Activated CD4-positive, alpha-beta T cell treated with anti-CD3 and anti-CD28 coated beads for 36 hours (primary cell): ENCODE measurements at regions of chr18 and their contacts with region 1.

Region 1: DNA sequence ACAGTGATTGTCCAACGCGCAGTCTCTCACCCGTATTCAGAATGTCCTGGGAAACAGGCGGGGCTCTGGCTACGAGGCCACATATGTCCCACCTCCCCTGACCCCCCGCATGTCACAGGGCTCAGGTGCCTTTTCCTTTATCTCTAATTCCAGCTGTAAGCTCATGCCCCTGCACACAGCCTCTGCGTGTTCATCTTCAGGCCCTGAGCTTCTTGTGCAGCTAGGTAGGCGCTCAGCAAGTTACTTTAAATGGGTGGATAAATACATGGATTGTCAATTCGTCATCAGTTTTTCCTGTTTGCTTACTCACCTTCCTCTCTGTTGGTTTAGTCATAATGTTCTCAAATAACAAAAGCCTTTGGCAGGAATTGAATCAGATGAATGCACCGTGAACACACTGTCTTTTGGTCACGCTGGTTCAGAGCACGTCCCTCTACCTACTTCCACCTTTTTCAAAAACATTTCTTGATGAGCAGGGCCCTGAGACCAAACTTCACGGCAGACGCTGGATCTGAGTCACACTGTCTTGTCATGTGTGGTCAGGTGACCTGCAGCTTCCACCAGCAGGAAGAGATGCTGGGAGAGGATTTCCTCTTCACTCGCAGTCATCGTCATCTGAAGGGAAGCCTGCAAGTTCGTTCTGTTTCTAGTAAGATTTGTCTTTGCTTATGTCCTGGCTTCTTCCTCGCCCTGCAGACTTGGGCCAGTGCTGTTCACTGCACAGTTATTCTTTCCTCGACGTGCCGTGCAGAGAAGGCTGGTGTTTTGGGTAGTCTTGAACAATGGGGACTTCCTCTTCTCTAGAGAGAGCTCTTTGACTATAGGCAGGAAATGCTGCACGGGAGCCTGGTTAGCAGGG is 138.1 kb downstream of the PTGR3 start:
- DNase-seq: peak; percentile 82
- ATAC-seq: peak; percentile 94
- H3K4me3 Mint-ChIP-seq: peak overlapping the region; percentile 63
- H3K27ac Mint-ChIP-seq: peak overlapping the region; percentile 97
- H3K4me1 Mint-ChIP-seq: peaks cover 32% of the 10 kb centered on the region
- H3K27me3 Mint-ChIP-seq: no peaks in the 10 kb centered on the region

Region 2: DNA sequence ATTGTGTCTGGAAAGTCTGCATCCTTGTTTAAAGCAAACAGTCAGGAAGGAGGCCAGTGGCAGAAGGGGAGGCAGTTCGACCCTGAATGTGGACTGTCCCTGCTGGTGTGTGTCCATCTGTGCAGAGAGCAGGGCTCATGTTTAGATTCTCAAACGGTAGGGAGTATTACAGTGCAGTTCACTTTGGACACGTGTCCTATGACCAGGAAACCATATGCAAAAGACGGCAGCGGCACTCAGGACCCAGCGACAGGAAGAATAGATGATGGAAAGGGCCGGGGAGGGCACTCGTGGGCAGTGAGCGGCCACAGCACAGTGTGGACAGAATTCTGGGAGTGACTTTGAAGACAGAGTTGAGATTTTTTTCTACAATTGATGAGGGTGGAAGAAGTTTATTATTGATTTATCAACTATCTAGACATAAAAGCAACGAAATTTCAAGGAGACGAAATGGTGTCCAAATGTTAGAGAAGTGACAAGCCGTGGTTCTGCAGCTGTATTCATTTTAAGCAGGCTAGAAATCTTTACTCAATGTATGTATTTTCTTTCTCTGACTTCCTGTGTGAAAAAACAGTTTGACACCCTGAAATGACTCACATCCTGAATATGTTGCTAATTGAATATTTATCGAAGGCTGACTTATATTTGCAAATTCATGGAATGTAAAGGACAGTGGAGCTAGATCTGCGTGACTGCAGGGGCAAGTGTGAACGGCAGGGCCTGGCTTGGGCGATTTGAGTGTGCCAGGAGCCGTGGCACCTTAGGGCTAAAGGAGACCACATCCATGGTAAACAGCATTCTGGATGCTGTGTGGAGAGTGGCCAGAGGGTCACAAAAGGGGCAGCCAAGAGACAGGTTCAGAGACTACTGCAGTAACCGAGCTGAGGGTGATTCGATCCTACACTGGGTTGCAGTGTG is 76.1 kb before region 1 on chr18:
- CTCF ChIA-PET with region 1: no interaction called
- POLR2A ChIA-PET with region 1: interaction called, 3 read pairs
- intact Hi-C with region 1: loop called (anchors 2 to 10 kb)
- DNase-seq: peak; percentile 38
- ATAC-seq: peak; percentile 84
- H3K4me3 Mint-ChIP-seq: peak overlapping the region; percentile 45
- H3K27ac Mint-ChIP-seq: peak overlapping the region; percentile 65
- H3K4me1 Mint-ChIP-seq: peaks cover 45% of the 10 kb centered on the region
- H3K27me3 Mint-ChIP-seq: no peaks in the 10 kb centered on the region

Region 3: DNA sequence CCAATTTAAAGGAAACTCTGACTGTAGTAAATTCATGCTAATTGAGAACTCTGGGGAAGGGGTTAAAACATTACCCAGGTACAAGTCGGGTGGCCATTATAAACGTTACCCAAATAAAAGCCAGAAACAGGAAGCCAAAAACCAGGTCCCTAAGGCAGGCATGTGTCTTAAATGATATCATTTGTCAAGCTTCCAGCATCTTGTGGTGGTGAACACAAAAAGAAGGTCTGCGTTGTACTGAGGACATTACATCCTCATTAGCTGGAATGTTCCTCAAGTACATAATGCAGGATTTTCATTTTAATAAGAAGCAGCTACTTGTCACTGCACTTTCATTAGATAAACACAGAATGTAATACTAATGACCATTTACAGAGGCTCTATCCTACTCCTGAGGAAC is 127.2 kb after region 1 on chr18:
- CTCF ChIA-PET with region 1: no interaction called
- POLR2A ChIA-PET with region 1: no interaction called
- intact Hi-C with region 1: no loop called
- DNase-seq: no peak
- ATAC-seq: no peak
- H3K4me3 Mint-ChIP-seq: no peak overlapping the region
- H3K27ac Mint-ChIP-seq: no peak overlapping the region
- H3K4me1 Mint-ChIP-seq: peaks cover 15% of the 10 kb centered on the region
- H3K27me3 Mint-ChIP-seq: no peaks in the 10 kb centered on the region

Region 4: GRCh38 chr18:75247611-75248421 is 177.0 kb after region 1 on chr18:
- CTCF ChIA-PET with region 1: no interaction called
- POLR2A ChIA-PET with region 1: no interaction called
- intact Hi-C with region 1: loop called in 1 of 2 experiments (anchors 2 kb)
- DNase-seq: no peak
- ATAC-seq: peak; percentile 47
- H3K4me3 Mint-ChIP-seq: peak overlapping the region; percentile 77
- H3K27ac Mint-ChIP-seq: peak overlapping the region; percentile 98
- H3K4me1 Mint-ChIP-seq: peaks cover 52% of the 10 kb centered on the region
- H3K27me3 Mint-ChIP-seq: no peaks in the 10 kb centered on the region

Region 5: GRCh38 chr18:75408554-75409506 is 338.0 kb after region 1 on chr18:
- CTCF ChIA-PET with region 1: no interaction called
- POLR2A ChIA-PET with region 1: no interaction called
- intact Hi-C with region 1: loop called in 1 of 2 experiments (anchors 1 kb)
- DNase-seq: peak; percentile 67
- ATAC-seq: peak; percentile 95
- H3K4me3 Mint-ChIP-seq: no peak overlapping the region
- H3K27ac Mint-ChIP-seq: no peak overlapping the region
- H3K4me1 Mint-ChIP-seq: peaks cover 24% of the 10 kb centered on the region
- H3K27me3 Mint-ChIP-seq: peaks cover 14% of the 10 kb centered on the region